ENCODE measurements at regions of chr5 and their contacts with region 1.

Region 1: DNA sequence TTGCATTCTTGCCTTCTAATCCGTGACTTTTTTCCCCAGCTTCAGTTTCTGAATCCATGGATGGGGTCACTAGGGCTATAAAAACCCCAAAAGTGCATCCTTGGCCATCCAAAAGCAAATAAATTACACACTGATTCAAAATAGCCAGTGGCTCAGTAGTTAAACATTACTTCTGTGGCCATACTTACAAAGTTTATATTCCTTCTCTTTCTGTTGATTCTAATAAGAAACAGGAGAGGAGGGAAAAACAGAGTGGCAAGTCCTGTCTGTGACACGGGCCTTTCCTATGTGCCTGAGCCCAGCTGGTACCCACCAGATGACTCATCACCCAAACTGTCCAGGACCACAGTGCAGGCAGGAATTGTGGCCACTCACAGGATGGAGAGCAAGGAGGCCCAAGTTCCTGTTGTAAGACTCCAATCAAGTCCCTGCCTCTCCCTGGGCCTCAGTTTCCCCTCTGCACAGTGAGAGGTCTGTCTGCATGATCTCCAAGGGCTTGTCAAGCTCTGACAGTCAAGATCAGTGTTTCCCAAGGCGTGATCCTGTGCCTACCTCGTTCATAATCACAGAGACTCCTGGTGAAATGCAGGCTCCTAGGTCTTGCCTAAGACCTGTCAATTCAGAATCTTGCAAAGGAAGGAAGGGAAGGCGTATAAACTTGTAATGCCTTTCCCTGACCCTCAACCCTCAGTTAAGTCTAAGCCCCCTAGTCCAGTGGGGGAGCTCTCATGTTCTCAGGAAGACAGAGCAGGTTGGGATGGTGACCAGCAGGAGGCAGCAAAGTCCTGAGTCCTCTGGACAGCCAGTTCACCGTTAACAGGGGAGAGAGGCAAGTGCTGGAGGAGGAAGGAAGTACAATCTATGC is 29.5 kb downstream of the TNIP1 start:
- DNase-seq: peak; percentile 94

Region 2: DNA sequence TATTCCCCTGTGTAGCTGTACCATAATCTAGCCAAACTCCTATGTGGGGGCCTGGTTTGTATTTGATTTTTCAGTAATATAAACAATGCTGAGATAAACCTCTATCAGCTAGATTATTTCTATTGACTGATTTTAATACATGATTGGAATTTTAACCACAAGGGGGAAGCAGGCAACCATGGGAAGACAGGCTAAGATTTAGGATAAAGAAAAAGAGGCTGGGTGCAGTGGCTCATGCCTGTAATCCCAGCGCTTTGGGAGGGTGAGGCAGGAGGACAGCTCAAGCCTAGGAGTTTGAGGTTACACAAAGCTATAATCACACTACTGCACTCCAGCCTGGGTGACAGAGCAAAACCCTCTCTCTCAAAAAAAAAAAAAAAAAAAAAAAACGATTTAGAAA is 49.0 kb before region 1 on chr5:
- intact Hi-C with region 1: loop called (anchors 5 kb)
- DNase-seq: no peak

Region 3: DNA sequence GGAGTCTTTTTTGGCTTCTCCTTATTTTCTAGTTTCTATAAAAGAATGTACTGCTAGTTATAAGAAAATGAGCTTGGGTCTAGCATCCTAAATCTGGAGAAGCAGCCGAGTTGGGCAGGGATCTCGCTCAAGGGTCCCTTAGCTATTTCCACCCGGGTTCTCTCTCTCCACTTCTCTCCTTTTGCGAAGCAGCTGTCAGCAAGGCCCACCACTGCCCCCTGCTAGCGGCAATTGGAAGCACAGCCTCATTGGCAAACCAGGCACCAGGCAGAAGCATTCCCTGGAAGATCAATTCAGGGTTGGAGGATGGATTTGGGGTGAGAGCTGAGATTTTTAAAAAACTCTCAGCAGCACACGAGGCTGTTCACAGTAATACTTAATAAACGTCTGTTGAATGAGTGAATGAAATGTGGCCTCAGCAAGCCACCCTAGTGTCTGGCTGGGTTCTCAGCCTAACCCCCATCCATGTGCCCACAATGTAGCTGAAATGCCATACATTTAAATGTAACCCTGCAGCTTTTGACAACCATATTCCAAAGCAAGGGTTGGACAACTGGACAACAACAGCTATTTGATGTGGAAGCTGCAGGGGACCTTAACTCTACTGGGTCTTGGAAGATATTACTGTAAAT is 64.1 kb after region 1 on chr5:
- intact Hi-C with region 1: loop called (anchors 2 to 5 kb)
- DNase-seq: peak; percentile 92

Region 4: DNA sequence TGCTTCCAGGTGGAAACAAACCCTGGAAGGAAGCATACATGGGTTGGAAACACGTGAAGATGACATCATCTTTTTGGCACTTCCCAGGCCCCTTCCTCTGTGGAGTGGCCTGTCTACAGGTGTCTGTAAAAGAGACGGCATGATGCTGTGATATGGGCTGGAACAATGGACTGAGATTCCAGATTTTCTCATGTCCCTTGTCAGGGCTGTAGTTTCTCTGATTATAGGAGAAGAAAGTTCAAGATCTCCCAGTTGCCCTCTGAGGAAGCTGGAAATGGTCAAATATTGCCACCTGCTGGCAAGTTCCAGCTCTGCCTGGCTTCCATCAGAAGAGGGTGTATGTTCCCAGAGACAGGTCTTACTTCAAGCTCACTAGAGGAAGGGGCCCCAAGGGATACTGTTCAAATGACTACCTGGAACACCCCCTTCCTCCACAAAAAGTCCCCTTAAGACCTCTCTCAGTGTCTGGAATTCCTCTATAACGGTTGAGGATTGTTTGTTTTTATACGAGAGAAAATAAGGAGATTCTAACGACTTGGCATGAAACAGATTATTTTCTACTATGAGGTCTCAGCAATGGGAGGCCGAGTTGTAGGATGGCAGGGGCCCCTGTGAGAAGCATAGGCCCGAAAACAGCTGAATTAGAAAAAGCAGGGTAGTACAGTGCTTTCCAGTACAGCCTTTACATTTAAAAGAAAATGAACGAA is 113.5 kb after region 1 on chr5:
- intact Hi-C with region 1: loop called in 1 of 2 experiments (anchors 5 kb)
- DNase-seq: peak; percentile 89

Region 5: GRCh38 chr5:151239237-151239861 is 188.1 kb after region 1 on chr5:
- intact Hi-C with region 1: loop called in 1 of 2 experiments (anchors 10 kb)
- DNase-seq: peak; percentile 95